Pancreas (tissue), 10 donors: ENCODE measurements at regions of chr1 and their contacts with region 1.

Region 1: DNA sequence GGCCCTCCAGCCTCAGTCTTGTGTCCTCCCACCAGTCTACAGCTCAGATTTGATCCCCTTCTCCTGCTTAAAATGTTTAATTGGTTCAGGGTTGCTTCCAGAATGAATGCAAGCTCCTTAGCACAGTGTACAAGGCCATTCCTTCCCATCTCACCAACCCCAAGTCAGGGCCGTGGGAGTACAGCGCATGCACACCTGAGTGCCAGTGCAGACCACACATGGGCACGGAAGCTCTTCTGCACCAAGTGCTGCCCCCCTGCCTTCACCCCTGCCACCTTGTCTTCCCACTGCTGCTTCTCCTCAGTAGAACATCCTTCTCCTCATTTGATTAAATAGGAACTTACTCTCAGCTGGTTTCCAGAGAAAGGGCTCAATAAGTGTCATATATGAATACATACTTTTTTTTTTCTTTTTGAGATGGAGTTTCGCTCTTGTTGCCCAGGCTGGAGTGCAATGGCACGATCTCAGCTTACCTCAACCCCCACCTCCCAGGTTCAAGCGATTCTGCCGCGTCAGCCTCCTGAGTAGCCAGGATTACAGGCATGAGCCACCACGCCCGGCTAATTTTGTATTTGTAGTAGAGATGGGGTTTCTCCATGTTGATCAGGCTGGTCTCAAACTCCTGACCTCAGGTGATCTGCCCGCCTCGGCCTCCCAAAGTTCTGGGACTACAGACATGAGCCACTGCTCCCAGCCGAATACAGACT is 9.3 kb downstream of the PMF1 start:
- DNase-seq: no peak
- ATAC-seq: no peak
- H3K4me3 ChIP-seq: no peak overlapping the region
- H3K27ac ChIP-seq: no peak overlapping the region
- H3K4me1 ChIP-seq: peaks cover 0 to 18% (median 11%) of the 10 kb centered on the region in 3 donors
- H3K27me3 ChIP-seq: no peaks in the 10 kb centered on the region
- CTCF ChIP-seq: no peak

Region 2: GRCh38 chr1:156082309-156083091 is 139.6 kb before region 1 on chr1 and contains the start of gene MEX3A:
- intact Hi-C with region 1: loop called in 1 of 3 experiments (anchors 5 kb)
- DNase-seq: peak; percentile 65 to 88 (median 70)
- ATAC-seq: peak; percentile 86 to 90 (median 87)
- H3K4me3 ChIP-seq: peak within 1 kb of the TSS; percentile 63 to 89 (median 80)
- H3K27ac ChIP-seq: peak within 1 kb of the TSS in 1 of 4 donors; percentile 27
- H3K4me1 ChIP-seq: peaks cover 0 to 3% (median 0%) of the 10 kb centered on the region in 3 donors
- H3K27me3 ChIP-seq: no peaks in the 10 kb centered on the region
- CTCF ChIP-seq: no peak
- total RNA-seq, gene MEX3A: 0.12 to 3.1 (median 0.65) TPM

Region 3: DNA sequence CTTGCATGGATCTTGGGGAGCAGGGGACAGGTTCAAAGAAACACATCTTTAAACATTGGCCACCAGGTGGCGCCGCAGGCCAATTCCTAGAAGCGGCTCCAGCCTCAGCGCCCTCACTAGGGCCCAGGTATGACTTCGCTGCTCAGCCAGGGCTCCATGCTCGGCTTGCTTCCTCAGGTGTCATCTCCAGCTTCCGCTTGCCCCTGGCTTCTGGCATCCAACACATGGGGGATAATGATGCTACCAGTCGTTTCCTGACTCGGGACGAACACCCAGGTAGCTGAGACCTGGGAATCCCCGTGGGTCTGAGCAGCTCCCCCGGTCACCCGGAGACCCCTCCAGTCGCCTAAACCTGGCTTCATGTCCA is 131.3 kb before region 1 on chr1:
- intact Hi-C with region 1: loop called in 2 of 3 experiments (anchors 5 kb)
- DNase-seq: peak; percentile 77 to 96 (median 90)
- ATAC-seq: peak; percentile 87 to 94 (median 93)
- H3K4me3 ChIP-seq: no peak overlapping the region
- H3K27ac ChIP-seq: peak overlapping the region in 1 of 4 donors; percentile 28
- H3K4me1 ChIP-seq: no peaks in the 10 kb centered on the region
- H3K27me3 ChIP-seq: no peaks in the 10 kb centered on the region
- CTCF ChIP-seq: peak; percentile 73 to 84 (median 78)

Region 4: GRCh38 chr1:156135821-156136477 is 86.2 kb before region 1 on chr1:
- intact Hi-C with region 1: no loop called
- DNase-seq: no peak
- ATAC-seq: no peak
- H3K4me3 ChIP-seq: no peak overlapping the region
- H3K27ac ChIP-seq: no peak overlapping the region
- H3K4me1 ChIP-seq: no peaks in the 10 kb centered on the region
- H3K27me3 ChIP-seq: no peaks in the 10 kb centered on the region
- CTCF ChIP-seq: no peak

Region 5: GRCh38 chr1:156146020-156146768 is 75.9 kb before region 1 on chr1:
- intact Hi-C with region 1: loop called in 2 of 3 experiments (anchors 5 kb)
- DNase-seq: peak in 3 of 6 donors; percentile 54 to 77 (median 70)
- ATAC-seq: peak; percentile 53 to 89 (median 80)
- H3K4me3 ChIP-seq: no peak overlapping the region
- H3K27ac ChIP-seq: no peak overlapping the region
- H3K4me1 ChIP-seq: peaks cover 0 to 2% (median 0%) of the 10 kb centered on the region in 3 donors
- H3K27me3 ChIP-seq: no peaks in the 10 kb centered on the region
- CTCF ChIP-seq: peak; percentile 37 to 56 (median 48)

Region 6: GRCh38 chr1:156445789-156446263 is 223.7 kb after region 1 on chr1:
- intact Hi-C with region 1: no loop called
- DNase-seq: peak; percentile 73 to 92 (median 86)
- ATAC-seq: peak; percentile 94 to 100 (median 99)
- H3K4me3 ChIP-seq: no peak overlapping the region
- H3K27ac ChIP-seq: no peak overlapping the region
- H3K4me1 ChIP-seq: no peaks in the 10 kb centered on the region
- H3K27me3 ChIP-seq: peaks cover 0 to 22% (median 0%) of the 10 kb centered on the region in 4 donors
- CTCF ChIP-seq: peak; percentile 86 to 96 (median 91)